ENCODE measurements at regions of chr12 and their contacts with region 1.

Region 1: DNA sequence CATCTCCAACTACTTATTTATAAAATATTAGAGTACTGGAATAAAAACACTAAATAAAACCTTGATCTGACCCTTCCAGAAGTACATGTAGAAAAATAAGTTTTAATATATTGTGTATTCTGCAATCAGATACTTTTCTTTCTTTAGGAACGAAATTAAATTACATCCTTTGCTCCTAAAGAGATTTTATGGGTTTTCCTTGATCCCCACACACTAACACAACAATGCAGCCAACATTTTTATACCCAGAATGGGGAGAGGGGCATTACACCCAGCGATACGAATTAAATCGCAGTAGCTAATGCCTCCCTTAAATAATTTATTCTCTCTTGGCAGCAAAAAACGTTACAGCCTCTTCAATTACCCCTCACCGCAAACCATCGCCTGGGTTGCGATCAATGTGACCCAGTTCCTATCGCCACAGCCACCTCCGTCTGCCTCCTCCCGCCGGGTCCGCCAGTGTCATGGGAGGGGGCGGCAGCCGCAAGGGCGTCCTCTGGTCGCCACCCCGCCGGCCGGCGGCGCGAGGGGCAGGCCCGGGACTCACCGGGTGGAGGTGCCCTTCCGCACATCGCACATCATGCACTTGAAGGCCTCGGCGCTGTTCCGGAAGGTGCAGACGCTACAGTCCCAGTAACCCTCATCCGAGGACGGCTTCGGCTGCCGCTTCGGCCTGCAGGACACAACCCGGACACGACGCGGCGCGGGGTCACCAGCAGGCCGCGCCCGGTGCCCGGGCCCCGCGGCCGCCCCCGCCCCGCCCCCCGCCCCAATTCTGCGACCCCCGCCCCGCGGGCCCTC is 796 bp downstream of the YAF2 start:
- DNase-seq: peak; percentile 85
- ATAC-seq: peak; percentile 85
- H3K4me3 Mint-ChIP-seq: peak overlapping the region; percentile 86
- H3K27ac Mint-ChIP-seq: peak overlapping the region; percentile 90
- H3K4me1 Mint-ChIP-seq: peaks cover 40% of the 10 kb centered on the region
- H3K27me3 Mint-ChIP-seq: no peaks in the 10 kb centered on the region

Region 2: DNA sequence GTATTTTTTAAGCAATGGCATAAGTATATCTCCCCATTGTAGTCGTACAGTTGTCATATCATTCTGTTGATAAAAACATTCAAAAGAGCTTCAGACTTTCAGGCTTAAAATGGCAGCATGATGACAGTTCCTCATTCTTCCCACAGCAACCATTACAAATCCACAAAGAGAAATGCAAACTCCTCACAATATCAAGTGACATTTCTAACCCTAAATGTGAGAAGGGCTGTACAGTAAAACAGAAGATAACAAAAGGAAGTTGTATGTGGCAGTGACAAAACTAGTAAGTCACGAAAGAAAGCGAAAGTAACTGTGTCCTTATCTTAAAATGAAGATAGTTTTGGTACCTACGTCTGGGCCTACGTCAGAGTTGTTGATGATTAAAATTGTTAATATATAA is 139.3 kb before region 1 on chr12:
- CTCF ChIA-PET with region 1: no interaction called
- POLR2A ChIA-PET with region 1: no interaction called
- intact Hi-C with region 1: loop called (anchors 5 kb)
- DNase-seq: peak; percentile 9
- ATAC-seq: peak; percentile 83
- H3K4me3 Mint-ChIP-seq: peak overlapping the region; percentile 72
- H3K27ac Mint-ChIP-seq: peak overlapping the region; percentile 93
- H3K4me1 Mint-ChIP-seq: peaks cover 43% of the 10 kb centered on the region
- H3K27me3 Mint-ChIP-seq: no peaks in the 10 kb centered on the region

Region 3: GRCh38 chr12:42144408-42145196 is 92.7 kb before region 1 on chr12 and contains the start of gene GXYLT1:
- CTCF ChIA-PET with region 1: no interaction called
- POLR2A ChIA-PET with region 1: no interaction called
- intact Hi-C with region 1: loop called (anchors 1 to 2 kb)
- DNase-seq: peak; percentile 85
- ATAC-seq: peak; percentile 91
- H3K4me3 Mint-ChIP-seq: peak within 1 kb of the TSS; percentile 92
- H3K27ac Mint-ChIP-seq: peak within 1 kb of the TSS; percentile 65
- H3K4me1 Mint-ChIP-seq: peaks cover 34% of the 10 kb centered on the region
- H3K27me3 Mint-ChIP-seq: peaks cover 2% of the 10 kb centered on the region
- total RNA-seq, gene GXYLT1: 6.1 to 6.7 TPM

Region 4: GRCh38 chr12:42299392-42300308 is 62.4 kb after region 1 on chr12:
- CTCF ChIA-PET with region 1: interaction called, 3 read pairs
- POLR2A ChIA-PET with region 1: no interaction called
- intact Hi-C with region 1: loop called (anchors 1 kb)
- DNase-seq: peak; percentile 88
- ATAC-seq: peak; percentile 95
- H3K4me3 Mint-ChIP-seq: peak overlapping the region; percentile 1
- H3K27ac Mint-ChIP-seq: peak overlapping the region; percentile 77
- H3K4me1 Mint-ChIP-seq: peaks cover 17% of the 10 kb centered on the region
- H3K27me3 Mint-ChIP-seq: no peaks in the 10 kb centered on the region

Region 5: GRCh38 chr12:42332301-42333285 is 95.3 kb after region 1 on chr12:
- CTCF ChIA-PET with region 1: no interaction called
- POLR2A ChIA-PET with region 1: no interaction called
- intact Hi-C with region 1: loop called in 1 of 2 experiments (anchors 1 kb)
- DNase-seq: peak; percentile 32
- ATAC-seq: peak; percentile 44
- H3K4me3 Mint-ChIP-seq: no peak overlapping the region
- H3K27ac Mint-ChIP-seq: no peak overlapping the region
- H3K4me1 Mint-ChIP-seq: peaks cover 63% of the 10 kb centered on the region
- H3K27me3 Mint-ChIP-seq: no peaks in the 10 kb centered on the region

Region 6: DNA sequence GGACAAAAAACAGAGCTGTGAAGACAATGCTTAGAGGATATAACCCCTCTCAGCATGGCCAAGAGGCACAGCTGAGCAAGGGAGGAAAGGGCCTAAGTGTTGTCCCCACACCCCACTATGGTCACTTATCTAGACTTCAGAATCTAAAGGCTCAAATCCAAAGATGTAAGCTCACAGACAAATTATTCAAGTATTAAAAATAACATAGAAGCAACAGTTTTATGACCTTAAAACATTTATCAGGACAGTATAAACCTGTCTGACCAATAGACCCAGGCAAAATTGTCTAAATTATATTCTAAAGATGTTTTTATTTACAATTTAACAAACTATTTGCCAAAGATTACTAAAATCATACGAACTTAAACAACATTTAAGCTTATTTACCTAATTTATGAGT is 380.4 kb after region 1 on chr12:
- CTCF ChIA-PET with region 1: no interaction called
- POLR2A ChIA-PET with region 1: no interaction called
- intact Hi-C with region 1: no loop called
- DNase-seq: no peak
- ATAC-seq: no peak
- H3K4me3 Mint-ChIP-seq: no peak overlapping the region
- H3K27ac Mint-ChIP-seq: no peak overlapping the region
- H3K4me1 Mint-ChIP-seq: no peaks in the 10 kb centered on the region
- H3K27me3 Mint-ChIP-seq: no peaks in the 10 kb centered on the region

Measured in activated CD4-positive, alpha-beta T cell treated with anti-CD3 and anti-CD28 coated beads for 36 hours (primary cell).